Left cardiac atrium (tissue), 4 donors: ENCODE measurements at regions of chr5 and their contacts with region 1.

Region 1: GRCh38 chr5:757931-758697 is 26.4 kb downstream of the ZDHHC11B start:
- DNase-seq: peak; percentile 90
- ATAC-seq: peak; percentile 51 to 65

Region 2: DNA sequence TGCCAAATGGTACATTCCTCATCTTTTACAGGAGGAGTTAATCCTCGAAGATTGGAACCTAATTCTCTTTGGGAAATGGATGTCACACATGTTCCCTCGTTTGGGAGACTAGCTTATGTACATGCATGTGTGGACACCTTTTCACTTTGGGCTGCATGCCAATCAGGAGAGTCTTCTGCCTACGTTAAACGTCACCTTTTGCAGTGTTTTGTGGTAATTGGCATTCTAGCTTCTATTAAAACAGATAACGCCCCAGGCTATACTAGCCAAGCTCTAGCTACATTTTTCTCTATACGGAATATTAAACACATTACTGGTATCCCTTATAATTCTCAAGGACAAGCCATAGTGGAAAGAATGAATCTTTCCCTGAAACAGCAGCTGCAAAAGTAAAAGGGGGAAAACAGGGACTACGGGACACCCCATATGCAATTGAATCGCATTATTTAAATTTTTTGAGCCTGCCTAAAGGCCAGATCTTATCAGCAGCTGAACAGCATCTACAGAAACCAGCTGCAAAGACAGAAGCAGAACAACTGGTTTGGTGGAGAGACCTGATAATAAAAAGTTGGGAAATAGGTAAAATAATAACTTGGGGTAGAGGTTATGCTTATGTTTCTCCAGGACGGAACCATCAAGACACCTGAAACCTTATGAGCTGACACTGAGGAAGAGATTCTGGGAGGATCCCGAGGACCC is 510.4 kb before region 1 on chr5:
- intact Hi-C with region 1: no loop called
- DNase-seq: no peak
- ATAC-seq: no peak

Region 3: DNA sequence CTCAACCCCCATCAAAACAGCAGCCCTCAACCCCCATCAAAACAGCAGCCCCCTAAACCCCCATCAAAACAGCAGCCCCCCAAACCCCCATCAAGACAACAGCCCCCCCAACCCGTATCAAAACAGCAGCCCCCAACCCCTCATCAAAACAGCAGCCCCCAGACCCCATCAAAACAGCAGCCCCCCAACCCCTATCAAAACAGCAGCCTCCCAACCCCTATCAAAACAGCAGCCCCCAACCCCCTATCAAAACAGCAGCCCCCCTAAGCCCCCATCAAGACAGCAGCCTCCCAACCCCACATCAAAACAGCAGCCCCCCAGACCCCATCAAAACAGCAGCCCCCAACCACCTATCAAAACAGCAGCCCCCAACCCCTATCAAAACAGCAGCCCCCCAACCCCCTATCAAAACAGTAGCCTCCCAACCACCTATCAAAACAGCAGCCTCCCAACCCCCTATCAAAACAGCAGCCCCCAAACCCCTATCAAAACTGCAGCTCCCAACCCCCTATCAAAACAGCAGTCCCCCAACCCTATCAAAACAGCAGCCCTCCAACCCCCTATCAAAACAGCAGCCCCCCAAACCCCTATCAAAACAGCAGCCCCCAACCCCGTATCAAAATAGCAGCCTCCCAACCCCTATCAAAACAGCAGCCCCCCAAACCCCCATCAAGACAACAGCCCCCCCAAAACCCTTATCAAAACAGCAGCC is 66.1 kb before region 1 on chr5:
- intact Hi-C with region 1: loop called in 1 of 2 experiments (anchors 2 kb)
- DNase-seq: peak; percentile 12
- ATAC-seq: no peak

Region 4: GRCh38 chr5:932628-933250 is 174.6 kb after region 1 on chr5:
- intact Hi-C with region 1: no loop called
- DNase-seq: no peak
- ATAC-seq: peak; percentile 53 to 54

Region 5: DNA sequence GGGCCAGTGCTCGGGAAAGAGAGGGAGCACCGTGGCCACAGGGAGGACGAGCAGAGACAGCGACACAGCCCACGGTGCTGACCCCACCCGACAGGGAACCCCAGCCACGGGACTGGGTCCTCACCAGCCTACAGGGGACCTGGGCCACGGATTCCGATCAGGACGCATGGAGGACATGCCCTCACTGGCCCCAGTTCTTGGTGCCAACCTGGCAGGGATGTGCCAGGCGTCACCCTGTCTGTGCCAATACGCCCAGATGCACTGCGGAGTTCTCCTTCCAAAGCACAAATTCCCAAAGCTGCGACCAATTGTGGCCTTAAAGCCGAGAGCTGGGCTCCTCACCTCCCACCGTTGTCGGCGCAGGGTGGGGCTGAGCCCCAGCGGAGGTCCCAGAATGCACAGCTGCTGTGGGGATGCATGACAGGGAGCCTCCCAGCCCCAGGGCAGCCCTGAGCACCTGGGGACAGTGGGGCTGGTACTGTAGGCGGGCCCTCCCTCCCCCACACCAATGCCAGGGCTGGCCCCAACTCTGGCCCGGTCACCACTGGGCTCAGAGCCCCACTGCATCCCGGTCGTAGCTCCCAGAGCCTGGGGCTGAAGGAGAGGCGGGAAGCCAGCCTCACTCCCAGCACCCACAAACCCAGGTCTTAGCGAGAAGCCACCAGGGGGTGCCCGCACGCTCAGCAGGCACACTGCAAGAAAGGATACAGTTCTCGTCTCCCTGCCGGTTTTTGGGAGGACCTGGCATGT is 294.7 kb after region 1 on chr5:
- intact Hi-C with region 1: no loop called
- DNase-seq: no peak
- ATAC-seq: no peak